ENCODE measurements at regions of chr2 and their contacts with region 1.

Region 1: GRCh38 chr2:157302492-157303099 is 23.0 kb downstream of the ERMN start:
- DNase-seq: peak; percentile 68
- ATAC-seq: peak; percentile 65
- H3K4me3 ChIP-seq: no peak overlapping the region
- H3K4me3 Mint-ChIP-seq: no peak overlapping the region
- H3K27ac ChIP-seq: no peak overlapping the region
- H3K27ac Mint-ChIP-seq: no peak overlapping the region
- H3K4me1 ChIP-seq: no peaks in the 10 kb centered on the region
- H3K4me1 Mint-ChIP-seq: peaks cover 1% of the 10 kb centered on the region
- H3K27me3 ChIP-seq: no peaks in the 10 kb centered on the region
- H3K27me3 Mint-ChIP-seq: peaks cover 4% of the 10 kb centered on the region
- CTCF ChIP-seq: peak; percentile 98

Region 2: GRCh38 chr2:157327621-157328500 is 25.3 kb after region 1 on chr2:
- CTCF ChIA-PET with region 1: interaction called, 95 read pairs
- POLR2A ChIA-PET with region 1: no interaction called
- intact Hi-C with region 1: no loop called
- DNase-seq: peak; percentile 88
- ATAC-seq: peak; percentile 98
- H3K4me3 ChIP-seq: peak overlapping the region in 1 of 5 experiments; percentile 2
- H3K4me3 Mint-ChIP-seq: peak overlapping the region; percentile 71
- H3K27ac ChIP-seq: no peak overlapping the region
- H3K27ac Mint-ChIP-seq: peak overlapping the region; percentile 60
- H3K4me1 ChIP-seq: peaks cover 9 to 10% of the 10 kb centered on the region in 2 donors
- H3K4me1 Mint-ChIP-seq: peaks cover 14% of the 10 kb centered on the region
- H3K27me3 ChIP-seq: no peaks in the 10 kb centered on the region
- H3K27me3 Mint-ChIP-seq: no peaks in the 10 kb centered on the region
- CTCF ChIP-seq: peak; percentile 97

Region 3: DNA sequence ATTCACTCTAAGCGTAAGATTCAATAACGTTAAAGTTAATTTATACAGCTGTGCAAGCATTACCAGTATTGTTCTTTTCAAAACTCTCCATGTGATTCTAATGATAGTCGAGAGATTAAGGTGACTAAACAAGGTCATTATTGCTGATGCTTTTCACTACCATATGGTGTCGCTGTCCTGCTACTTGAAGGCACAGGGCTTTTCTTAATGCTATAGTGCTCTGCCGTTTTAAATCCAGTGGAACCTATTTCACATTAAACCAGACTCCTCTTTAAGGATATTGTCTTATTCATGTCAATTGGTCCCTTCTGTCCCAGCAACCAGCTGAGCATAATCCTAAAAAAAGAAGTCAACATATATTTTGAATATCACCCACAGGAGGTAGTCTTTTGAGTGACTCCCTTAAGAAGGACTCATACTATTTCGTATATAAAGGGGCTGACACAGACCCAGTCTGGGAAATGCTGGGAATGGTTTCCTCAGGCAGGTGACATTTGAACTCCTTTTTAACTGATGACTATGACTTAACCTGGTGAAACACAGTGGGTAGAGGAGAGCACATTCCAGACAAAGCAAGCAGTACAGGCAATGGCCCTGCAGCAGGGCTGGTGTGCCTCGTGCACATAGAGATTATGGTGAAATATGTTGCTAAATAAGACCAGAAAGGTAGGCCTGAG is 195.2 kb after region 1 on chr2:
- CTCF ChIA-PET with region 1: interaction called, 44 read pairs
- POLR2A ChIA-PET with region 1: no interaction called
- intact Hi-C with region 1: loop called (anchors 2 kb)
- DNase-seq: peak; percentile 58
- ATAC-seq: peak; percentile 71
- H3K4me3 ChIP-seq: no peak overlapping the region
- H3K4me3 Mint-ChIP-seq: no peak overlapping the region
- H3K27ac ChIP-seq: no peak overlapping the region
- H3K27ac Mint-ChIP-seq: no peak overlapping the region
- H3K4me1 ChIP-seq: peaks cover 23 to 27% of the 10 kb centered on the region in 2 donors
- H3K4me1 Mint-ChIP-seq: peaks cover 41% of the 10 kb centered on the region
- H3K27me3 ChIP-seq: no peaks in the 10 kb centered on the region
- H3K27me3 Mint-ChIP-seq: no peaks in the 10 kb centered on the region
- CTCF ChIP-seq: peak; percentile 88

Region 4: GRCh38 chr2:157596992-157597681 is 294.5 kb after region 1 on chr2:
- CTCF ChIA-PET with region 1: interaction called, 197 read pairs
- POLR2A ChIA-PET with region 1: interaction called, 3 read pairs
- intact Hi-C with region 1: loop called (anchors 1 kb)
- DNase-seq: peak; percentile 67
- ATAC-seq: peak; percentile 84
- H3K4me3 ChIP-seq: peak overlapping the region in 3 of 5 experiments; percentile 6 to 42 (median 27)
- H3K4me3 Mint-ChIP-seq: peak overlapping the region; percentile 66
- H3K27ac ChIP-seq: no peak overlapping the region
- H3K27ac Mint-ChIP-seq: no peak overlapping the region
- H3K4me1 ChIP-seq: peaks cover 0 to 4% of the 10 kb centered on the region in 2 donors
- H3K4me1 Mint-ChIP-seq: peaks cover 7% of the 10 kb centered on the region
- H3K27me3 ChIP-seq: peaks cover 0 to 8% (median 2%) of the 10 kb centered on the region in 4 experiments
- H3K27me3 Mint-ChIP-seq: peaks cover 16% of the 10 kb centered on the region
- CTCF ChIP-seq: peak; percentile 75

Region 5: GRCh38 chr2:157751462-157752058 is 449.0 kb after region 1 on chr2:
- CTCF ChIA-PET with region 1: interaction called, 23 read pairs
- POLR2A ChIA-PET with region 1: no interaction called
- intact Hi-C with region 1: loop called (anchors 2 kb)
- DNase-seq: peak; percentile 25
- ATAC-seq: peak; percentile 17
- H3K4me3 ChIP-seq: no peak overlapping the region
- H3K4me3 Mint-ChIP-seq: no peak overlapping the region
- H3K27ac ChIP-seq: no peak overlapping the region
- H3K27ac Mint-ChIP-seq: no peak overlapping the region
- H3K4me1 ChIP-seq: no peaks in the 10 kb centered on the region
- H3K4me1 Mint-ChIP-seq: peaks cover 2% of the 10 kb centered on the region
- H3K27me3 ChIP-seq: no peaks in the 10 kb centered on the region
- H3K27me3 Mint-ChIP-seq: no peaks in the 10 kb centered on the region
- CTCF ChIP-seq: peak; percentile 29

Region 6: GRCh38 chr2:158024288-158024898 is 721.8 kb after region 1 on chr2:
- CTCF ChIA-PET with region 1: interaction called, 21 read pairs
- POLR2A ChIA-PET with region 1: no interaction called
- intact Hi-C with region 1: no loop called
- DNase-seq: peak; percentile 51
- ATAC-seq: peak; percentile 60
- H3K4me3 ChIP-seq: no peak overlapping the region
- H3K4me3 Mint-ChIP-seq: no peak overlapping the region
- H3K27ac ChIP-seq: no peak overlapping the region
- H3K27ac Mint-ChIP-seq: no peak overlapping the region
- H3K4me1 ChIP-seq: no peaks in the 10 kb centered on the region
- H3K4me1 Mint-ChIP-seq: no peaks in the 10 kb centered on the region
- H3K27me3 ChIP-seq: no peaks in the 10 kb centered on the region
- H3K27me3 Mint-ChIP-seq: no peaks in the 10 kb centered on the region
- CTCF ChIP-seq: peak; percentile 90

Measured in B cell (primary cell).